ENCODE measurements at regions of chr12 and their contacts with region 1.

Region 1: GRCh38 chr12:114508529-114509129 is 102.7 kb upstream of the TBX5 start:
- DNase-seq: peak; percentile 71
- H3K4me3 Mint-ChIP-seq: no peak overlapping the region
- H3K27ac Mint-ChIP-seq: no peak overlapping the region
- H3K4me1 Mint-ChIP-seq: peaks cover 2% of the 10 kb centered on the region
- H3K27me3 Mint-ChIP-seq: peaks cover 5% of the 10 kb centered on the region

Region 2: GRCh38 chr12:113965951-113966797 is 542.5 kb before region 1 on chr12 and contains the start of gene RBM19:
- CTCF ChIA-PET with region 1: interaction called, 26 read pairs
- POLR2A ChIA-PET with region 1: no interaction called
- intact Hi-C with region 1: loop called (anchors 1 kb)
- DNase-seq: peak; percentile 98
- H3K4me3 Mint-ChIP-seq: peak within 1 kb of the TSS; percentile 100
- H3K27ac Mint-ChIP-seq: peak within 1 kb of the TSS; percentile 92
- H3K4me1 Mint-ChIP-seq: peaks cover 53% of the 10 kb centered on the region
- H3K27me3 Mint-ChIP-seq: no peaks in the 10 kb centered on the region
- total RNA-seq, gene RBM19: 69.6 to 74.1 TPM

Region 3: DNA sequence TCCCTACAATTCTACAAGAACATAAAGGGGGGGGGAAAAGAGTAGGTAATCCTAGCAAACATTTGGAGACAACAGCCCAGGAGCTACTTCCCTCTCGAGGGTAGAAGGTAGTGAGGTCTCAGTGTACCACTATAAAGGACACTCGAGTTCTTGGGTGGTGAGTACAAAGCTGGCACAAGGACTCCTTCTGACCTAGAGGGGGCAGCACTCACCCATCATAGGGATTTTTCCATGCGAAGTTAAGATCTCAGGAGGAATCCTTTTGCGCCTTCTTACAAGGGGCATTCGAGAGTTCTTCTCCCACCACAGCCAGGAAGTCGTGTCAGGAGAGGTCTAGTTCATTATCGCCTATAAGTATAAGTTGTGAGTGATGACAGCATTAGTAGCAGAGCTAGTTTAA is 342.3 kb before region 1 on chr12:
- CTCF ChIA-PET with region 1: interaction called, 10 read pairs
- POLR2A ChIA-PET with region 1: no interaction called
- intact Hi-C with region 1: no loop called
- DNase-seq: no peak
- H3K4me3 Mint-ChIP-seq: no peak overlapping the region
- H3K27ac Mint-ChIP-seq: no peak overlapping the region
- H3K4me1 Mint-ChIP-seq: no peaks in the 10 kb centered on the region
- H3K27me3 Mint-ChIP-seq: no peaks in the 10 kb centered on the region

Region 4: GRCh38 chr12:114612062-114612461 is 103.4 kb after region 1 on chr12:
- CTCF ChIA-PET with region 1: no interaction called
- POLR2A ChIA-PET with region 1: no interaction called
- intact Hi-C with region 1: no loop called
- DNase-seq: no peak
- H3K4me3 Mint-ChIP-seq: no peak overlapping the region
- H3K27ac Mint-ChIP-seq: no peak overlapping the region
- H3K4me1 Mint-ChIP-seq: no peaks in the 10 kb centered on the region
- H3K27me3 Mint-ChIP-seq: peaks cover 5% of the 10 kb centered on the region